HepG2 (cell line): ENCODE measurements at regions of chr15 and their contacts with region 1.

Region 1: DNA sequence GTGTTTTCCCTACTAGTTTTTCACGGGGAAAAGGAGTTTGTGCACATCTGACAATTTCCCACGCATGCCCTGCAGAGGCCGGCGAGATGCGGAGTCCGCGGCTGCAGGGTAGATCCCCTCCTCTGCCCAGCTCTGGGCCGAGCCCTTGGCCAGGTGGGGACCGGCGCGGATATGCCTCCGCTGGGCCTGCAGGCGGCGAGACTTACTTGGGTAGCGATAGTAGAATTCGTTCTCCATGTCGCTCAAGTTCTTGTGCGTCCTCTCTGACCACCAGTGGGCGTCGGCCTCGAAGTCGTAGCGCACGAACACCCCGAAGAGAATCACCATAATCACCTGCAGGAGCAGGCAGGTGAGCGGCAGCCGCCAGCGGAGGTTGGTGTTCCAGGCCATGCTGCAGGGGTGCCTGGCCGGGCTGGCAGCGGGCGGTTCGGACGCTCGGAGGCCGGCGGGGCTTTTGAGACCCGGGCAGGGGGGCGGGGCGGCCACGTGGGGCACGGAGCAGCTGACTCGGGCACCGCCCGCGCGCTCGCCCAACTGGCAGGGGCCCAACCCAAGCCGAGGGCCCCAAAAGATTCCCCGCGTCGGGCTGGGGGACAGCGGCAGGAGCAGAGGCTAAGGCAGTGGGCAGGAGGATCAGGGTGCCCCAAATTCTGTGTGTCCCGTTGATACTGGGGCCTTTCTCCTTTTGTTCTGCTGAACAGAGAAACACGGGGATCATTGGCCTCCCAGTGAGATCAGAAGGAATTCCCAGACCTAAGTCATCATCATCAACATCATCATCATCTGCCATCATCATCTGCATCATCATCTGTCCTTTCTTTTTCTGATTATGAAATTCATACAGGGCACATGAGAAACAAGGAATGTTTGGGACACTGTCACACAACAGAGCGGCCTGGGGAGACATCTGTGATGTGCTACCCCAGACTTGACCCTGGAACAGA is at the start of gene RHCG:
- DNase-seq: peak; percentile 69
- ATAC-seq: peak; percentile 93
- H3K4me3 ChIP-seq: peak within 1 kb of the TSS; percentile 45 to 67 (median 52); a peak in 4 of 6 replicates
- H3K27ac ChIP-seq: no peak within 1 kb of the TSS
- H3K4me1 ChIP-seq: no peaks in the 10 kb centered on the region; the same call in 1 of the 2 replicates
- H3K27me3 ChIP-seq: peaks cover 6 to 44% of the 10 kb centered on the region in 2 experiments; a peak in 3 of 5 replicates
- CTCF ChIP-seq: peak; percentile 75
- EP300 ChIP-seq: no peak
- POLR2A ChIP-seq: no peak
- RAD21 ChIP-seq: peak; percentile 63
- total RNA-seq, gene RHCG: not detected in 2 replicates

Region 2: DNA sequence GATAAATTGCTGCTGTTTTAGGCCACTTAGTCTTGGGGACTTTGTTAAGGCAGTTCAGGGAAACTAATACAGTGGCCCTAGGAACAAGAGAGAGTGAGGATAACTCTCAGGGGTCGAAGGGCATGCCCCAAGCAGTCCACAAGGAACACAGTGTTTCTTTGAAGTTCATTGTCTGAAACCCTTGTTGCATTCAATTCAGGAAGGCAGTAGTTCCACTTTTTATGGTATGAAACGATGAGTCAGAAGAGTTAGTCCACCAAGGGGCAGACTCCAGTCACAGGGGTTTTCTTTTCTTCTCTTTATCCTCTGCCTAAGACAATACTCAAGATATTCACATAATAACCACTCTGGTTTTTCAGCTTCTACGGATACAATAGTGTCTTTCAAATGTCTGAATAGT is 55.1 kb after region 1 on chr15:
- CTCF ChIA-PET with region 1: interaction called, 8 read pairs
- POLR2A ChIA-PET with region 1: no interaction called
- in situ Hi-C with region 1: loop called (anchors 5 kb)
- intact Hi-C with region 1: loop called (anchors 2 kb)
- DNase-seq: no peak
- ATAC-seq: no peak
- H3K4me3 ChIP-seq: no peak overlapping the region
- H3K27ac ChIP-seq: no peak overlapping the region
- H3K4me1 ChIP-seq: 0 out of 2 replicates have a peak, but pooled peaks cover 8% of the 10 kb centered on the region
- H3K27me3 ChIP-seq: peaks cover 3 to 13% of the 10 kb centered on the region in 2 experiments; a peak in 3 of 5 replicates
- CTCF ChIP-seq: no peak
- EP300 ChIP-seq: no peak
- POLR2A ChIP-seq: no peak
- RAD21 ChIP-seq: no peak

Region 3: DNA sequence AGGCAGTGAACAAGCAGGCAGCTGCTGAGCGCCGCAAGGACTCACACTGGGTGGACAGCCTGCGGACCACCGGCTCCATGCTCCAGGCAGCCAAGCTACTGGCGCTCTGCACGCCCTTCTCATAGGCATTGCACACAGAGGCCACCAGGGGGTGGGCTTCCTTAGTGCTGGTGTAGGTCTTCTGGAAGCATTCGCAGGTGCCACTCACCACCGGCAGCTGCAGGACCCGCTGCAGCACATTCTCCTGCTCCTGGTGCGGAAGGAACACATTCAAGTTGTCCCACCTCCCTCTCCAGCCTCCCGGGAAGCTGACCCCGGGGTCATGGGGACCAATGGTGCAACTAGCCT is 176.7 kb after region 1 on chr15:
- CTCF ChIA-PET with region 1: no interaction called
- POLR2A ChIA-PET with region 1: no interaction called
- in situ Hi-C with region 1: no loop called
- intact Hi-C with region 1: loop called (anchors 10 kb)
- DNase-seq: peak; percentile 25
- ATAC-seq: peak; percentile 66
- H3K4me3 ChIP-seq: no peak overlapping the region
- H3K27ac ChIP-seq: no peak overlapping the region
- H3K4me1 ChIP-seq: peaks cover 29% of the 10 kb centered on the region
- H3K27me3 ChIP-seq: no peaks in the 10 kb centered on the region
- CTCF ChIP-seq: peak; percentile 60
- EP300 ChIP-seq: no peak
- POLR2A ChIP-seq: no peak
- RAD21 ChIP-seq: 0 out of 2 replicates have a peak, but pooled peaks have one; percentile 28